IMR-90 (cell line): ENCODE measurements at regions of chr5 and their contacts with region 1.

Region 1: GRCh38 chr5:39349484-39349883 is 14.8 kb downstream of the C9 start:
- DNase-seq: no peak
- ATAC-seq: no peak
- H3K4me3 ChIP-seq: no peak overlapping the region
- H3K27ac ChIP-seq: no peak overlapping the region
- H3K4me1 ChIP-seq: no peaks in the 10 kb centered on the region
- H3K27me3 ChIP-seq: peaks cover 8% of the 10 kb centered on the region
- CTCF ChIP-seq: no peak
- POLR2A ChIP-seq: no peak
- RAD21 ChIP-seq: no peak

Region 2: GRCh38 chr5:39362646-39363045 is 13.2 kb after region 1 on chr5:
- CTCF ChIA-PET with region 1: interaction called, 10 read pairs
- POLR2A ChIA-PET with region 1: no interaction called
- dilution Hi-C with region 1: no loop called
- in situ Hi-C with region 1: no loop called
- intact Hi-C with region 1: no loop called
- DNase-seq: no peak
- ATAC-seq: no peak
- H3K4me3 ChIP-seq: no peak overlapping the region
- H3K27ac ChIP-seq: no peak overlapping the region
- H3K4me1 ChIP-seq: no peaks in the 10 kb centered on the region
- H3K27me3 ChIP-seq: no peaks in the 10 kb centered on the region
- CTCF ChIP-seq: no peak
- POLR2A ChIP-seq: no peak
- RAD21 ChIP-seq: no peak